ENCODE measurements at regions of chr18 and their contacts with region 1.

Region 1: GRCh38 chr18:24118750-24119577 is 19.9 kb upstream of the CABYR start:
- DNase-seq: peak; percentile 61
- H3K4me3 Mint-ChIP-seq: no peak overlapping the region
- H3K27ac Mint-ChIP-seq: peak overlapping the region; percentile 44
- H3K4me1 Mint-ChIP-seq: peaks cover 31% of the 10 kb centered on the region
- H3K27me3 Mint-ChIP-seq: no peaks in the 10 kb centered on the region

Region 2: DNA sequence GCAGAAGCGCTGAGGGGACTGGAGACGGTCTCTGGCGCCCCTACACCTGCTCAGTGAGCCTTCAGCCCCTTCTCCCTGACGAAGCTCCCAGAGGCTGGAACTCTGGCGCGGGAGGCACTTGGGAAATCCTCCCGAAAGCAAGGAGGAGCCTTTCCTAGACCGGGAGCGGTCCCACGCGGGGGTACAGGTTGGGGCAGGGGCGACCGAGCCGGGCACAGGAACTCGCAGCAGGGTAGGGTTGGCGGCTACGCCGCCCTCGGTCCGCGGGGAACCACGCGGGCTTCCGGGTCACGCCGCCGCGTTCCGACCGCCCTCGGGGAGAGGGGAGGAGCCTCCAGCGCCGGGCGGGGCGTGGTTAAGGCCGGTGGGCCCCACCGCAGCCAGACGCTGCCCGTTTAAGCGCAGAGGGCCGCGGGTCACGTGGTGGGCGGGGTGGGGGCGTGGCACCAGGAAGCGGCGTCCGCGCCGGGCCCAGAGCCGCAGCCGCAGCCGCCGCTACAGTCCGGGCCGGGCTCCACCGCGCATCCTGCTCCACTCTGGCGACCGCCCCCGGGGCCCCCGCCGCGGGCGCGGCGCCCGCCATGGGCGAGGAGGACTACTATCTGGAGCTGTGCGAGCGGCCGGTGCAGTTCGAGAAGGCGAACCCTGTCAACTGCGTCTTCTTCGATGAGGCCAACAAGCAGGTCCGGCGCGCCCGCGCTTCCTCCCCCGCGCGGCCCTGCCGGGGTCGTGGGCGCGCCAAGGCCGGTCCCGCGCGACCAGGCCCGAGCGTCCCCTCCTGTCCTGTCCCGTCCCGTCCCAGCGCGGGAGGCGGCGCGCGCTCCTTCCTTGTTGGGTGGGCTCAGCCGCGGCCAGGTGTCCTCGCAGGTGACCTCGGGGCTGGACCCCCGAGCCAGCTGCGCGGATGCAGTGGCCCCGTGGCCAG is 615.7 kb before region 1 on chr18 and contains the start of gene RMC1:
- intact Hi-C with region 1: loop called (anchors 1 kb)
- DNase-seq: peak; percentile 96
- H3K4me3 Mint-ChIP-seq: peak within 1 kb of the TSS; percentile 97
- H3K27ac Mint-ChIP-seq: peak within 1 kb of the TSS; percentile 91
- H3K4me1 Mint-ChIP-seq: peaks cover 66% of the 10 kb centered on the region
- H3K27me3 Mint-ChIP-seq: no peaks in the 10 kb centered on the region
- total RNA-seq, gene RMC1: 56.3 and 56.7 TPM in 2 replicates

Region 3: GRCh38 chr18:23619388-23619881 is 499.5 kb before region 1 on chr18:
- intact Hi-C with region 1: loop called (anchors 1 kb)
- DNase-seq: no peak
- H3K4me3 Mint-ChIP-seq: peak overlapping the region; percentile 22
- H3K27ac Mint-ChIP-seq: no peak overlapping the region
- H3K4me1 Mint-ChIP-seq: peaks cover 15% of the 10 kb centered on the region
- H3K27me3 Mint-ChIP-seq: peaks cover 53% of the 10 kb centered on the region

Region 4: GRCh38 chr18:23828426-23828825 is 290.5 kb before region 1 on chr18:
- intact Hi-C with region 1: loop called (anchors 1 kb)
- DNase-seq: peak; percentile 49
- H3K4me3 Mint-ChIP-seq: no peak overlapping the region
- H3K27ac Mint-ChIP-seq: peak overlapping the region; percentile 89
- H3K4me1 Mint-ChIP-seq: peaks cover 52% of the 10 kb centered on the region
- H3K27me3 Mint-ChIP-seq: peaks cover 4% of the 10 kb centered on the region

Region 5: GRCh38 chr18:23953984-23954383 is 165.0 kb before region 1 on chr18:
- intact Hi-C with region 1: no loop called
- DNase-seq: no peak
- H3K4me3 Mint-ChIP-seq: no peak overlapping the region
- H3K27ac Mint-ChIP-seq: no peak overlapping the region
- H3K4me1 Mint-ChIP-seq: peaks cover 5% of the 10 kb centered on the region
- H3K27me3 Mint-ChIP-seq: peaks cover 17% of the 10 kb centered on the region

Region 6: DNA sequence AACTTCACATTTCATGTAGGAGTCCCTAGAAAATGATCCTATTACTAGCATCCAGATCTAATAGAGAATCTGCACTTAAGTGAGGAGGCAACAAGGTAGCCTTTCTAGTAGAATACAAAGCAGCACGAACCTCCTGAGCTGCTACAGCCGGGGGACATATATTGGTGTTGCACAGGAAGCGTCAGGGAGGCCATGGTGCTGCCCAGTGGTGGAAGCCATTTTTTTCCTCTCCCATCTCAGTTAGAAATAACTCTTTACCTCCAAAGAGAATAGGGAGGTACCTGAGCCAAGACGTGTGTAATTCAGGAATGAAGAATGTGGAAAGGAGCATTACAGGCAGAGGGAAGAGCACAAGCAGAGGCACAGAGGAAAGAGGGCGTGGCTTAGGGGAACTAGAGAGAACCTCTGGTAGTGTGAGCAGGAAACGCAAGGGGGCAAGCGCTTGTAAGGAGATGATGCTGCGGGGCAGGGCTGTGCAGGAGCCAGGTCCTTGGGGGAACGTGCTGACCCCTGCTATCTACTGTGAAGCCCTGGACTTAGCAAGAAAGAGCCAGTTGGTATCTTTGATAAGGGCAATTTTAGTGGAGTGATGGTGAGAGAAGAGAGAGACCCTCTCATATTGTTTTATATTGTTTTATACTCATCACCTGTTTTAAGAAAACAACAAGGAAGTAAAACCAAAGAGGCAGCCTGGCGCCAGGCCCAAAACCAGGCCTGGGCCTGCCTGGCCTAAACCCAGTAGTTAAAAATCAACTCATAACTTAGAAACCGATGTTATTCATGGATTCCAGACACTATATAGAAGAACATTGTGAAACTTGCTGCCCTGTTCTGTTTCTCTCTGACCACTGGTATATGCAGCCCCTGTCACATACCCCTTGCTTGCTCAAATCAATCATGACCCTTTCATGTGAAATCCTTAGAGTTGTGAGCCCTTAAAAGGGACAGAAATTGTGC is 154.4 kb before region 1 on chr18:
- intact Hi-C with region 1: loop called (anchors 1 kb)
- DNase-seq: no peak
- H3K4me3 Mint-ChIP-seq: no peak overlapping the region
- H3K27ac Mint-ChIP-seq: peak overlapping the region; percentile 62
- H3K4me1 Mint-ChIP-seq: peaks cover 43% of the 10 kb centered on the region
- H3K27me3 Mint-ChIP-seq: peaks cover 8% of the 10 kb centered on the region

Region 7: DNA sequence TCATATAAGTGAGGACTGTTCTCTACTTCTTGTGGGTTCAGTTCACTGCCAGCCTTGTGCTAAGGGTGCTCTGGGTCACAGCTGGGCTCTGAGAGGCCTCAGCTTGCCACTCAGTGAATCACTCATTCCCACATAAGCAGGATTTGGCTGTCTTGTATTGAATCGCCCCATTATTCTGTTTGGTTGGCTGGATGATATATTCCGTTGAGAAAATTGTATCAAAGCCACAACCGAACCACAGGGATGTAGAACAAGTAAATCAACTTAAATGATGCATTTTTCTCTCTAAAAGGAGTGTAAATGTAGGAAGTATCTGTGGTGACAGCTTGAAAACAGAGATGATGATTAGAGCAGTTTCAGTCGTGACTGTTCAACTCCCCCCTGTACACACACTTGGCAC is 64.8 kb before region 1 on chr18:
- intact Hi-C with region 1: loop called (anchors 1 kb)
- DNase-seq: no peak
- H3K4me3 Mint-ChIP-seq: peak overlapping the region; percentile 12
- H3K27ac Mint-ChIP-seq: peak overlapping the region; percentile 74
- H3K4me1 Mint-ChIP-seq: peaks cover 76% of the 10 kb centered on the region
- H3K27me3 Mint-ChIP-seq: no peaks in the 10 kb centered on the region

Region 8: DNA sequence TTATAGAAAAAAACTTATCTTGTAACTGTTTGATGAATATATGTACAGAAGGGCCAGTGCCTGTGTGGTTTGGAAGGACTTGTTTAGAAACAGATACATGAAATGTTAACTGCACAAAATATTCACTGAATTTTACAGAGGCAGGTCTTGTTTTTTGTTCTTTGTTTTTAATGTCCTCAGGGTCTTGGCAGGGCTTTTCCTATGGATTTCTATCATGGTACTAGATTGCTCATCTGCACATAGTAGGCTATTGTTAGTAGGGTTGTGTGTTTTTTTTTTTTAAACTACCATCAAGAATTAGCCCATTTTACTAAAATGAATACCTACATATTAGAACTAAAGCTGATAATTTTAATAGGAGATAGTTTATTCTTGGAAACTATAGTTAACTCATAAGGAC is 23.4 kb after region 1 on chr18:
- intact Hi-C with region 1: no loop called
- DNase-seq: no peak
- H3K4me3 Mint-ChIP-seq: no peak overlapping the region
- H3K27ac Mint-ChIP-seq: no peak overlapping the region
- H3K4me1 Mint-ChIP-seq: peaks cover 15% of the 10 kb centered on the region
- H3K27me3 Mint-ChIP-seq: peaks cover 37% of the 10 kb centered on the region